Activated B cell treated with CpG ODN at 0.5 μM for 24 hours (primary cell): ENCODE measurements at regions of chr17 and their contacts with region 1.

Region 1: DNA sequence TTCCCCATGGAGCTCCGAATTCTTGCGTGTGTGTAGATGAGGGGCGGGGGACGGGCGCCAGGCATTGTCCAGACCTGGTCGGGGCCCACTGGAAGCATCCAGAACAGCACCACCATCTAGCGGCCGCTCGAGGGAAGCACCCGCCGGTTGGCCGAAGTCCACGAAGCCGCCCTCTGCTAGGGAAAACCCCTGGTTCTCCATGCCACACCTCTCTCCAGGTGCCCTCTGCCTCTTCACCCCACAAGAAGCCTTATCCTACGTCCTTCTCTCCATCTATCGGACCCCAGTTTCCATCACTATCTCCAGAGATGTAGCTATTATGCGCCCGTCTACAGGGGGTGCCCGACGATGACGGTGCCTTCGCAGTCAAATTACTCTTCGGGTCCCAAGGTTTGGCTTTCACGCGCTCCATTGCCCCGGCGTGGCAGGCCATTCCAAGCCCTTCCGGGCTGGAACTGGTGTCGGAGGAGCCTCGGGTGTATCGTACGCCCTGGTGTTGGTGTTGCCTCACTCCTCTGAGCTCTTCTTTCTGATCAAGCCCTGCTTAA is 617 bp upstream of the SENP3 start:
- DNase-seq: peak; percentile 76
- ATAC-seq: peak; percentile 68
- H3K4me3 Mint-ChIP-seq: peak overlapping the region; percentile 92
- H3K27ac Mint-ChIP-seq: peak overlapping the region; percentile 96
- H3K4me1 Mint-ChIP-seq: peaks cover 60% of the 10 kb centered on the region
- H3K27me3 Mint-ChIP-seq: no peaks in the 10 kb centered on the region
- CTCF ChIP-seq: no peak

Region 2: DNA sequence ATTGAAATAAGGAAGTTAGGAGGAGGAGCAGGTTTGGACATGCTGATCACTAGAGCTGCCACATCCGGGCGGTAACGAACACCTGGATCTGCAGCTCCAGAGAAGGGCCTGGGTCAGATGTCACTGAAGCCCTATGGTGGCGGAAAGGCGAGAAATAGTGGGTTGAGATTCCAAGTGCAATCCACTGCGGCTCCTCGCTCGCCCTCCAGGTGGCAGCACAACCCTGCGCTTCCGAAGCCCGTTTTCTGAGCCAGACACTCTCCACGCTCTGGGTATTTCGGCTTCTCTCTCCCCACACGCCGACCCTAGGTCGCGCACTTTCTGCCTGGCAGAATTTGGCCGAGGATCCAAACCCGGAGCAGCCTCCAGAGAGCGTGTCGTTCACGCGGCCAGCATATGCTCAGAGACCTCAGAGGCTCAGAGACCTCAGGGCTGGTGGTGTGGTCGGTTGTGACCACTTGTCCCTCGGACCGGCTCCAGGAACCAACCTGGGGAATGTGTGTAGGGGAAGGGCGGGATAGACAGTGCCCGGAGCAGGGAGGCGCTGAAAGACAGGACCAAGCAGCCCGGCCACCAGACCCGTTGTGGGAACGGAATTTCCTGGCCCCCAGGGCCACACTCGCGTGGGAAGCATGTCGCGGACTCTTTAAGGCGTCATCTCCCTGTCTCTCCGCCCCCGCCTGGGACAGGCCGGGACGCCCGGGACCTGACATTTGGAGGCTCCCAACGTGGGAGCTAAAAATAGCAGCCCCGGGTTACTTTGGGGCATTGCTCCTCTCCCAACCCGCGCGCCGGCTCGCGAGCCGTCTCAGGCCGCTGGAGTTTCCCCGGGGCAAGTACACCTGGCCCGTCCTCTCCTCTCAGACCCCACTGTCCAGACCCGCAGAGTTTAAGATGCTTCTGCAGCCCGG is 280.3 kb before region 1 on chr17:
- CTCF ChIA-PET with region 1: interaction called, 3 read pairs
- POLR2A ChIA-PET with region 1: no interaction called
- intact Hi-C with region 1: loop called (anchors 1 kb)
- DNase-seq: peak; percentile 82
- ATAC-seq: peak; percentile 83
- H3K4me3 Mint-ChIP-seq: peak overlapping the region; percentile 82
- H3K27ac Mint-ChIP-seq: peak overlapping the region; percentile 77
- H3K4me1 Mint-ChIP-seq: peaks cover 14% of the 10 kb centered on the region
- H3K27me3 Mint-ChIP-seq: peaks cover 12% of the 10 kb centered on the region
- CTCF ChIP-seq: peak; percentile 42

Region 3: DNA sequence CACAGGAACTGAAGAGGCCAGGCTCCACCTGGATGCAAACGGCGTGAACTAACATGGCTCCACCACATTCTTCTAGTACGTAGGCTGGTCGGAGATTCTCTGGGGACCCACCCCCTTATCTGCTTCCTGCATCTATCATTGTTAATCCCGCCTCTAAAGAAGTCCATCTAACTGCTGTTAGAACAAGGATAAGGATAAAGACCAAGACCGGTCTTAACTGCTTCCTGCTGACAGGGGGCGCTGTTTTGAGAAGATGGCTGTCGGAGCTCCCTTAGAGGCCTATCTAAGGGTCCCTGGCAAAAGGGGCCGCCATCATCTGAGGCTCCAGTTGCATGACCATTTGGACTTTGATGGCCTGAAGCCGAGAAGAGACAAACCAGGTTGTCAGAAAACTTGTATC is 38.1 kb before region 1 on chr17:
- CTCF ChIA-PET with region 1: interaction called, 364 read pairs
- POLR2A ChIA-PET with region 1: interaction called, 15 read pairs
- intact Hi-C with region 1: loop called (anchors 1 kb)
- DNase-seq: peak; percentile 27
- ATAC-seq: peak; percentile 58
- H3K4me3 Mint-ChIP-seq: no peak overlapping the region
- H3K27ac Mint-ChIP-seq: no peak overlapping the region
- H3K4me1 Mint-ChIP-seq: peaks cover 4% of the 10 kb centered on the region
- H3K27me3 Mint-ChIP-seq: no peaks in the 10 kb centered on the region
- CTCF ChIP-seq: no peak

Region 4: DNA sequence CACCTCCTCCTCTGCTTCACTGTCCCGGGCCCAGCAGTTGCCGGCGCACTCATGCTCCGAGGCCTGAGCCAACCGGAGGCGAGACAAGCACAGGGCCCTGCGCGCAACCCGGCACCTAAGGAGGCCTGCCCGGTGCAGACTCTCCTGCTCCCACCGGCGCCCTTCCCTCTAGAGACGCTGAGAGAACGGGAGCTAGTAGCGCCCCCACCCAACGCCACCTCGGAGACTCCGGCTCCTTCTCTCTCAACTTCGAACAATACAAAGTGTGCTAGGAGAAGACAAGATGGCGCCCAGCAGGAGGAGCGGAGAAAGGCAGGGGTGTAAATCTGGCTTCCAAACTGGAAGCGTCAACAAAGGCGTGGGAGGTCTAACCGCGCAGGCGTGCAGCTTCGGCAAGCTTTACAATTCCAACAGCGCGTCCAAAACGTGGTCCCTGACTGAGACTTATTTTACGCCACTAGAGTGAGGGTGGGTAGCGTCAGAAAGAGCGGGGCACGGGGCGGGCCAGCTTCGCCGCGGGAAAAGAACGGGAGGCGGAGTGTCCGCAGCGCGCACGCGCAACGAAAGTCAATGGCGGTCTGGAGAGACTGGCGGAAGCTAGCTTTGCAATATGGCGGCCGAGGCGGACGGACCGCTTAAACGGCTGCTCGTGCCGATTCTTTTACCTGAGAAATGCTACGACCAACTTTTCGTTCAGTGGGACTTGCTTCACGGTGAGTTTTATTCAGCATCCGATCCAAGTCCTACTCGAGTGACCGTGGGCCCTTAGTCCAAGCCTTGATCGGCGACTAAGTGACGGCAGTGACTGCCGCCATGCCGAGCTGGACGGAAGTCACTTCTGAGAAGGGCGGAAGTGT is 22.4 kb after region 1 on chr17 and contains the start of gene MPDU1:
- CTCF ChIA-PET with region 1: interaction called, 23 read pairs
- POLR2A ChIA-PET with region 1: interaction called, 39 read pairs
- intact Hi-C with region 1: loop called (anchors 1 kb)
- DNase-seq: peak; percentile 90
- ATAC-seq: peak; percentile 76
- H3K4me3 Mint-ChIP-seq: peak within 1 kb of the TSS; percentile 100
- H3K27ac Mint-ChIP-seq: peak within 1 kb of the TSS; percentile 100
- H3K4me1 Mint-ChIP-seq: peaks cover 64% of the 10 kb centered on the region
- H3K27me3 Mint-ChIP-seq: no peaks in the 10 kb centered on the region
- CTCF ChIP-seq: no peak
- total RNA-seq, gene MPDU1: 50.7 and 58.9 TPM in 2 replicates

Region 5: GRCh38 chr17:7614422-7615264 is 53.5 kb after region 1 on chr17 and contains the start of gene FXR2:
- CTCF ChIA-PET with region 1: interaction called, 4 read pairs
- POLR2A ChIA-PET with region 1: no interaction called
- intact Hi-C with region 1: loop called (anchors 1 kb)
- DNase-seq: peak; percentile 97
- ATAC-seq: peak; percentile 93
- H3K4me3 Mint-ChIP-seq: peak within 1 kb of the TSS; percentile 87
- H3K27ac Mint-ChIP-seq: peak within 1 kb of the TSS; percentile 93
- H3K4me1 Mint-ChIP-seq: peaks cover 37% of the 10 kb centered on the region
- H3K27me3 Mint-ChIP-seq: no peaks in the 10 kb centered on the region
- CTCF ChIP-seq: no peak
- total RNA-seq, gene FXR2: 27.5 and 32.4 TPM in 2 replicates

Region 6: DNA sequence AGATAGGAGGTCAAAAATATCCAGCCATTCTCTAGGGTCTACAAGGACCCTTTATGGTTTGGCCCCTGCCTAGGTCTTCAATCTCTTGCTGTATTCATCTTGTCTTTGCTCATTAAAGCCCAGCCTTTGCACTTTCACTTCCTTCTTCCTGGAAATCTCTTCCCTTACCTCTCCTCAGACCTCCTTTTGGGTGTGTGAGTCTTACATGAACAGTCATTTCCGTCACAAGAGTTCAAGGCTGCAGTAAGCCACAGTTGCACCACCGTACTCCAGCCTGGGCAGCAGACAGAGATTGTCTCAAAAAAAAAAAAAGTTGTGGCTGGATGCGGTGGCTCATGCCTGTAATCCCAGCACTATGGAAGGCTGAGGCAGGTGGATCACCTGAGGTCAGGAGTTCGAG is 83.7 kb after region 1 on chr17:
- CTCF ChIA-PET with region 1: no interaction called
- POLR2A ChIA-PET with region 1: no interaction called
- intact Hi-C with region 1: no loop called
- DNase-seq: no peak
- ATAC-seq: peak; percentile 49
- H3K4me3 Mint-ChIP-seq: no peak overlapping the region
- H3K27ac Mint-ChIP-seq: no peak overlapping the region
- H3K4me1 Mint-ChIP-seq: peaks cover 6% of the 10 kb centered on the region
- H3K27me3 Mint-ChIP-seq: peaks cover 23% of the 10 kb centered on the region
- CTCF ChIP-seq: no peak